ENCODE measurements at regions of chr9 and their contacts with region 1.

Region 1: DNA sequence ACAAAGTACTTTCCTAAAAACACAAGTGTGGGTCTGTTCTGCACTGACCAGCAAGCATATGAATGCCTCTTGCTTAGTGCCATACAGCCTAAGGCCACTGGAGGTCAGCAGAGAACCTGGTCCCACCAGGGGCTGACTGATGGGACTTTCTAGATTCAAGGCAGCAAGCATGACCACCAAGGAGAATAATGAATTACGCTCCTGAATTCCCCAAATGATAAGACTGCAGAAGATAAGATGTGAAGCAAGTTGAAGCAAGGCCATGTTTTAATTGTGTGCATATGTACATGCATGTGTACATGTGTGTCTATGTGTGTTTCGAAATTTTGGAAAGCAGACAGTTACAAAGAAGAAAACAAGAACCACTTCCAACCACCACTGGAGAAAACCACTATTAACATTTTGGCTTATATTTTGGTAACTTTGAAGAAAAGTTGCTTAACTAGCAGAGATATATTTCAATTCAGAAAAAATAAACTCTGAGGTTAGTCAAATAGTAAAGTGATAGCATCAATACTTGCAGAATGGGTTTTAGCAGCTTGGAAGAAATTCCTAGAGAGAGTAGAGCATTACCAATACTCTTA is 70.5 kb downstream of the ERP44 start:
- DNase-seq: peak; percentile 32 to 65
- ATAC-seq: peak; percentile 78 to 93
- H3K4me3 ChIP-seq: no peak overlapping the region
- H3K27ac ChIP-seq: no peak overlapping the region
- H3K4me1 ChIP-seq: no peaks in the 10 kb centered on the region
- H3K27me3 ChIP-seq: no peaks in the 10 kb centered on the region
- CTCF ChIP-seq: peak; percentile 68 to 97 (median 83)
- POLR2A ChIP-seq: no peak

Region 2: DNA sequence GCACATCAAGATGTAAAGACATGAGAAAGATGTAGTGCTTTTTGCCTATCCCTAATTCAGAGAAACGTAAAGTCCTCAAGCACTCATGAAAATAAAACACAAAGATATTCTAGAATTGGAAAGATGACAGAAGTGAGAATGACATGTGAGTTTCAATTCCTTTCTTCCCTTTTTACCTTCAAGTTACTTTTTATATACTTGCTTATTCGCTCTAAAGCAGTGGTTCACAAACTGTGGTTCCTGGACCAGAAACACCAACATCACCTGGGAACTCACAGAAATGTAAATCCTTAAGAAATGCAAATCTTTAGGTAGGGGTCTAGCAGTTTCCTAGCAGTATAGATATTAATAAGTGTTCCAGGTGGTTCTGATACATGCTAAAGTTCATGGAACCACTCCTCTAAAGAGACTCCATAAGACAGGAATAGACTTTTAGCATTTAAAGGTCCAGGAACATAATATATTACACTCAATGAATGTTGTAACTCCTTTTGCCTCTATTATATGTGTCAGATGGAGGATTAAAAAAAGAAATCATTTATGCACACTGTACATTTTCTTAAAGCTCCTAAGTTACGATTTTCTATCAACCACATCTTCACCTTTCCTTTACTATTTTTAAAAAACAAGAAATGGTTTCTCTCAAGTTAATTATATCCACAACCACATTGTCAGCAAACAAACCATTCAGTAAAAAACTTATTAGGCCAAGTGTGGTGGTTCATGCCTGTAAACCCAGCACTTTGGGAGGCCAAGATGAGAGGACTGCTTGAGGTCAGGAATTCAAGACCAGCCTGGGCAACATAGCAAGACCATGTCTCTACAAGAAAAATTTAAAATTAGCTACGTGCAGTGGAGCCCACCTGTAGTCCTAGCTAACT is 30.6 kb after region 1 on chr9:
- in situ Hi-C with region 1: no loop called
- intact Hi-C with region 1: no loop called
- DNase-seq: no peak
- ATAC-seq: no peak
- H3K4me3 ChIP-seq: no peak overlapping the region
- H3K27ac ChIP-seq: no peak overlapping the region
- H3K4me1 ChIP-seq: peaks cover 0 to 4% of the 10 kb centered on the region in 2 donors
- H3K27me3 ChIP-seq: no peaks in the 10 kb centered on the region
- CTCF ChIP-seq: no peak
- POLR2A ChIP-seq: no peak

Region 3: DNA sequence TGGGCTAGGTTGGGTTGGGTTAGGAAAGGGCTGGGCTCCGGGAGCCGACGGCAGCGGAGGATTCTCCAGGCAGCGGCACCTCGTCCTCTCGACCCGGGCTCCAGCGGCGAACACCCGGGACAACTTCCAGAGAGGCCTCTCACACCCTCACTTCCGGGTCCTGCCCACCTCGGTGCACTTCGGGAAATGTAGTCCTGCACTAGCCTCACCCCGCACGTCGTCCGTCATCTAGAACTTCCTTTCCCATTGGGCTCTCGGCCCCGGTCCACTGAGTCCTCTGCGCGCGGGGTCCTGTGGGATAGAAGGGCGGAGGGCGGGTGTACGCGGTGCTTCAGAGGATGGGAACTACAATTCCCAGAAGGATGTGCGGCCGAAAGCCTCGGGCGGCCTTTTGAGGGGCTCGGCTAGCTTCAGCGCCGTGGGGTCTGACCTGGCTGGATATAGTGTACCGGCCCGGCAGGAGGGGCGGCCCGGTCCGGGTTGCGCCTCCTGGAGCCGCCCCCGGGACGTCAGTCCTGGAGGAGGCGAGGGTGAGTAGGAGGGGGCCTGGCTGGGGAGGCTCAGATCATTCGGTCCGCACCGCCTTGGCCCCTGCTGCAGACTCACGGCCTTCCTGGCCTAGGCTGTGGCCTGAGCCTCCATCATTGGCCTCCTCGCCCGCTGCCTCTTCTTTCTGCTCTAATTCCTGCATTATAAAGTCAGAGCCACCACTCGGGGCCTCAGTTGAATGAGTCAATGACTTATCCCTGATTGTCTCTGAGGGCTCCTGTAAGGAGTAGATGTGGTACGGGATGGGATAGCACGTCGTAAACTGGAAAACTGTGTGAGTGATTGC is 70.8 kb after region 1 on chr9 and contains the starts of genes ERP44 and INVS:
- in situ Hi-C with region 1: no loop called
- intact Hi-C with region 1: loop called (anchors 5 kb)
- DNase-seq: peak; percentile 99 to 100
- ATAC-seq: peak; percentile 95
- H3K4me3 ChIP-seq: peak within 1 kb of the TSS; percentile 87 to 98 (median 98)
- H3K27ac ChIP-seq: peak within 1 kb of the TSS; percentile 90 to 99 (median 95)
- H3K4me1 ChIP-seq: peaks cover 31 to 38% of the 10 kb centered on the region in 2 donors
- H3K27me3 ChIP-seq: no peaks in the 10 kb centered on the region
- CTCF ChIP-seq: no peak
- POLR2A ChIP-seq: peak; percentile 92 to 94
- total RNA-seq, gene ERP44: 7.0 to 10.8 (median 9.7) TPM
- total RNA-seq, gene INVS: 5.5 to 13.9 (median 6.7) TPM

Region 4: GRCh38 chr9:100216178-100216787 is 188.0 kb after region 1 on chr9:
- in situ Hi-C with region 1: loop called (anchors 5 to 25 kb)
- intact Hi-C with region 1: loop called (anchors 1 kb)
- DNase-seq: peak in 1 of 2 donors; percentile 28
- ATAC-seq: peak in 1 of 2 donors; percentile 53
- H3K4me3 ChIP-seq: no peak overlapping the region
- H3K27ac ChIP-seq: no peak overlapping the region
- H3K4me1 ChIP-seq: peaks cover 0 to 4% of the 10 kb centered on the region in 2 donors
- H3K27me3 ChIP-seq: no peaks in the 10 kb centered on the region
- CTCF ChIP-seq: peak; percentile 40 to 70 (median 52)
- POLR2A ChIP-seq: no peak

Region 5: DNA sequence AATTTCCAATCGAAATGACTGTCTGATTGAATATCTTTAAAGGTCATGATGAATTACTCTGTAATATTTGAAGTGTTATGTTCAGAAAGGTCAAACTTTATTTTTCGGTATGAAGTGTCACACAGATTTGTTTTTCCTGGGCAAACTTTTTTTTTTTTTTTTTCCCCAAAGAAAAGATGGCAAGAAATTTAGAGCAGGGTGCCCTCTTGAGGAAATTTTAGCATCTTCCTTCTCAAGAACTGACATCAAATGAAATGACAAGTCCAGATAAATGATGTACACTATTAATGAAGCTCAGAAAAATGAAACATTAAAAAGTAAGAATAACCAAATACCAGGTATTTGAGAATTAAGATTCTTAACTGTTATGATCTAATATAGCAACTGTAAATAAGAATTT is 194.4 kb after region 1 on chr9:
- in situ Hi-C with region 1: loop called in 3 of 4 experiments (anchors 5 to 25 kb)
- intact Hi-C with region 1: no loop called
- DNase-seq: no peak
- ATAC-seq: no peak
- H3K4me3 ChIP-seq: no peak overlapping the region
- H3K27ac ChIP-seq: no peak overlapping the region
- H3K4me1 ChIP-seq: no peaks in the 10 kb centered on the region
- H3K27me3 ChIP-seq: no peaks in the 10 kb centered on the region
- CTCF ChIP-seq: peak in 2 of 5 experiments; percentile 22 to 26
- POLR2A ChIP-seq: no peak

Region 6: GRCh38 chr9:100322954-100323536 is 294.8 kb after region 1 on chr9:
- in situ Hi-C with region 1: loop called in 2 of 4 experiments (anchors 10 kb)
- intact Hi-C with region 1: loop called (anchors 1 kb)
- DNase-seq: no peak
- ATAC-seq: no peak
- H3K4me3 ChIP-seq: no peak overlapping the region
- H3K27ac ChIP-seq: no peak overlapping the region
- H3K4me1 ChIP-seq: no peaks in the 10 kb centered on the region
- H3K27me3 ChIP-seq: no peaks in the 10 kb centered on the region
- CTCF ChIP-seq: peak in 4 of 5 experiments; percentile 24 to 69 (median 49)
- POLR2A ChIP-seq: no peak

Measured in gastrocnemius medialis (tissue), 4 donors.